GM13976 (cell line): ENCODE measurements at regions of chr1 and their contacts with region 1.

Region 1: DNA sequence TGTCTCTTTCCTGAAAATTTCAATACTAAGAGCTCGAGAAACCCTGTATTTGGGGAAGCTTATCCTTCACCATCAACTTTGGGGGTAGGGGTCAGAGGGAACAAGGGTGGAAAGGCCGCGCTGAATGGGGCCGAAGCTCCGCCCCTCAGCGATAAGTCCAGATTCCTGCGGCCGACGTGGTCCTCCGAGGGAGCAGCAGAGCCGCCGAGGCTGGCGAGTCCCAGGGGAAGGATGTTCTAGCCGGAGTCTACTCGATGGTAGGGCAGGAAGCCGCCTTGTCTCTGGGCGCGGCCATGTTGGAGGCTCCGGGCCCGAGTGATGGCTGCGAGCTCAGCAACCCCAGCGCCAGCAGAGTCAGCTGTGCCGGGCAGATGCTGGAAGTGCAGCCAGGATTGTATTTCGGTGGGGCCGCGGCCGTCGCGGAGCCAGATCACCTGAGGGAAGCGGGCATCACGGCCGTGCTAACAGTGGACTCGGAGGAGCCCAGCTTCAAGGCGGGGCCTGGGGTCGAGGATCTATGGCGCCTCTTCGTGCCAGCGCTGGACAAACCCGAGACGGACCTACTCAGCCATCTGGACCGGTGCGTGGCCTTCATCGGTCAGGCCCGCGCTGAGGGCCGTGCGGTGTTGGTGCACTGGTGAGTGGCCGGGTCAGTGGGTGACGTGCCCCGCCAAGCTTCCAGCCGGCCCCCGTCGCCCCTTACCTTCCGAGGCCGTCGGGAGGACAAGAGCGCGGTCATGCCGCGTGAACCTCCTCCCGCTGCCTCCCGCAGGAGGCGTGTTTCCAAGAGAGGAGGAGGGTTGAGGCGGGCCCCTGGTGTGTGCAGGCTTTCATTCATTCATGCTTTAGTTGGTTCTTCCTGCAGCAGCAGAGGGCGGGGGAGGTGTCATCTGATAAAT is at the start of gene DUSP12:
- DNase-seq: peak; percentile 90
- CTCF ChIP-seq: peak; percentile 53

Region 2: DNA sequence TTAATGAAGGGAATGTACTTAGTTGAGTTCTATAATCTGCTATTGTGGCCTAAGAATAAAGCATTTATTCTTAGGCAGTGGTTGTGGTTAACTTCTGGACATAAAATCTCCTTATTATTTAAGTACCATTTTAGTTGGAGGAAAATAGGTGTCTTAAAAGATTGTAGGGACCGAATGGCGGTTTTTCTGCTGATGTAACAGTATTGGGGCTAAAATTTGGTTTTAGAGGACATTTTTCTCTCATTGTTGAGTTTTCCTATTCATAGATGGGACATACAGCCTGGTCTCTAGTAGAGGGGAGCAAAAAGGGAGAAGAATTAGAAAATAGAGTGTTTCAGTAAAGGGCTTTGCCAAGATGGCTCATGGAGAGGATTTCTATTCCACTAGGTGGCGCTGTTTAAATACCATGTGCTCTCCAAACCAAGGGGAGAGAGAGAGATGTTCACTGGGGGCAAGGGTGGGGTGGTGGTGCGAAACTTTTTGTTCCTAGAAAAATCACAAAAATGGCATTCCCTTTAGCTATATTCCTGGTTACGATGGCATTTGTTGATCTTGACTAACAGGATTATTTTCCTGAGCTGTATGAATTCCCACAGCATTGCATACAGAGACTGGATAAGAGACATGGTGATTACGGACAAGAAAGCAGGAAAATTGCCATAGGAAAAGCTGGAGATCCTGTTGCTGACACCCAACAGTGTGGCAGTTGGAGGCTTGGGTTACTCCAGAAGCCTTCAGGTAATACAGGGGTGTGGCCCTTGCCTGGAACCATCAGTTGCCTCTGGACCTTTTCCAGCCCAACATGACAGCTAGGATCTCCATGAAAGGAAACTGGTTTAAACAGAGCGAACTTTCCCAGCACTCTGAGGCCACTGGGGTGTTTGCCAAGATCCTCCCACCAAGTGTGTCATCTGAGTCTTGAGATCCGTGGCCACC is 262.7 kb before region 1 on chr1:
- in situ Hi-C with region 1: loop called (anchors 10 kb)
- DNase-seq: peak; percentile 67
- CTCF ChIP-seq: peak; percentile 67

Region 3: DNA sequence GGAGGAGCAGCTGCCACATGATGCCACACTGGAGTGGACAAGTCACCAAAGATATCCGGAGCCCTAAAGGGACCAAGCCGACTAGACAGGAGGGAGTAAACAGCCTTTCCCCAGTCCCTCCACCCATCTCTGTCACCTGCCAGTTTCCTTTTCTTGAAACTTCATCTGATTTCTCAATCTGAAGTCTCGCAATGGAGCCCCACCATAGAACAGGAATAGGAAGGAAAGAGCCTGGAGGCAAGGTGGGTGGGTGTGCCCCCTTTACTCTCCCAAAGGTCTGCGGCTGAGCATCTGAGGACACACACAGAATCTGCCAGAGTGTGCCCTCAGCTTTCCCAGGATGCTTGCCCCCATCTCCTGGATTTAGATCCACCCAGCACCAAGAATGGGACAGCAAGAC is 118.7 kb before region 1 on chr1 and contains the start of gene FCGR3B:
- in situ Hi-C with region 1: loop called (anchors 25 kb)
- DNase-seq: no peak
- CTCF ChIP-seq: no peak

Region 4: DNA sequence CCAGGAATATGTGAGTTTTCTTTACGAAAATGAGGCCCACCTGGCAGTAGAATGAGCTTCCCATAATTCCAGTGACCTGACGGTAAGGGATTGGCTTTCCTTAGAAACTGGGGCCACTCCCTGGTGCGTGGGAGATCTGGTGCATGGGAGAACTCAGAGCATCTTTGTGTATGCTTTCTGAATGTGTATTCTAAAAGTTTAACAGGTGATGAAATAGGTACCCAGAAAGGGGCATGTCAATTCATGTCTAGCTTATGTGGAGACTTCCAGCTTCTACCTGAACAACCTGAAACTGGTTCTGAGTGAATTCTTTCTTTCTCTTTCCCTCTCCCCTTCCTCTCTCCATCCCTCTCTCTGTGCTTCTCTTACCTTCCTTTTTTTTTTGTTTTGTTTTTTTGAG is 57.9 kb before region 1 on chr1:
- in situ Hi-C with region 1: no loop called
- DNase-seq: no peak
- CTCF ChIP-seq: no peak

Region 5: GRCh38 chr1:161801955-161802354 is 52.2 kb after region 1 on chr1:
- in situ Hi-C with region 1: no loop called
- DNase-seq: no peak
- CTCF ChIP-seq: no peak